Left cardiac atrium (tissue), 4 donors: ENCODE measurements at regions of chr10 and their contacts with region 1.

Region 1: GRCh38 chr10:133329491-133330202 is 7.0 kb downstream of the CALY start:
- DNase-seq: peak; percentile 90
- ATAC-seq: peak; percentile 81 to 87

Region 2: DNA sequence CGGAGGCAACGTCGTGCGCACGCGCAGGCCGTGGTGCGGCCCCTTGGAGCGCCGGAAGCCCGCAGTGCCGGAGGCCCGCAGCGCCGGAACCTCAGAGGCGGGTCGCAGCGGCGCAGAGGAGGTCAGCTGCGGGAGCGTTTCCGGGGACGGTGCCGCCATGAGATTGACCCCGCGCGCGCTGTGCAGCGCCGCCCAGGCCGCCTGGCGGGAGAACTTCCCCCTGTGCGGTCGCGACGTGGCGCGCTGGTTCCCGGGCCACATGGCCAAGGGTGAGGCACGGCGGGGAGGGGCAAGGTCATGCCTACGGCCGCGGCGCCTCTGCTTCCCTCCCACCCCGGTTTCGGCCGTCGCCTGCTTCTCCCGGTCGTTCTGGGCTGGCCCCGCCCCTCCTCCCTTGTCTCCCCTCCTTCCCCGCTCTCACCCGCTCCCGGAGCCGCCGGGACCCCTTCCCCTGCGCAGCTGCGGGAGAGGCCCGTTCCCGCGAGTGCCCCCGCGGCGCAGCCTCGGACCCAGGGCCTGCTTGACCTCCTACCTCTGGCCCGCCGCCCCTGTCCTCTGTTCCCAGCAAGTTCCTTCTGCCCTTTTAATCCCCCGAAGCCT is 64.5 kb after region 1 on chr10 and contains the start of gene MTG1:
- intact Hi-C with region 1: loop called in 1 of 2 experiments (anchors 2 kb)
- DNase-seq: peak; percentile 96
- ATAC-seq: peak; percentile 97 to 99
- total RNA-seq, gene MTG1: 18.8 to 23.2 TPM

Region 3: DNA sequence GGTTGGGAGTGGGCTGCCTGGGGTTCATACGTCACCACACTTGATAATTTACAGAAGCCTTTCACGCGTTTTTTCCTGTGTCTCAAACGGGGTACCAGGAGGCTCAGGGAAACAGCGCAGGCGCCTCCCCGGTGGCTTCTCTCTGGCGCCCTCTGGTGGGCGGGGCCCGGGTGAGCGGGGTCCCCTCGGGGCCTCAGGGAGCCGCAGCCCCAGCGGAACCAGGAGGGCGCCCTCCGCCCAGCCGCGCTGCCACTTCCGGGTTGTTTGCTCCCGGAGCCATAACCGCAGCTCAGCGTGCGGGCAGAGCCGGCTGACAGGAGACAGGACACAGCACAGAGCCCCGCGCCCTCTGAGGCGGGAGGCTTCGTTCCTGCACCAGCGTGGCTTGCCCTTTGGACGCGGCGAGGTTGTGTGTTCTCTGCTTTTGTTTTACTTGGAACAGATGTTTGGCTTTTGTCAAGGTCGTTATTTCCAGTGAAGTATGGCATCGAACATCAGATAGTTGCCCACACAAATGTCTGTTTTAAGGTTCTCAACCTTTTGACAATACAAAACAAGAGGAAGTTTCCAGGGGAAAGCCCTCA is 190.6 kb after region 1 on chr10:
- intact Hi-C with region 1: loop called in 1 of 2 experiments (anchors 10 kb)
- DNase-seq: peak; percentile 85
- ATAC-seq: peak; percentile 98 to 99

Region 4: DNA sequence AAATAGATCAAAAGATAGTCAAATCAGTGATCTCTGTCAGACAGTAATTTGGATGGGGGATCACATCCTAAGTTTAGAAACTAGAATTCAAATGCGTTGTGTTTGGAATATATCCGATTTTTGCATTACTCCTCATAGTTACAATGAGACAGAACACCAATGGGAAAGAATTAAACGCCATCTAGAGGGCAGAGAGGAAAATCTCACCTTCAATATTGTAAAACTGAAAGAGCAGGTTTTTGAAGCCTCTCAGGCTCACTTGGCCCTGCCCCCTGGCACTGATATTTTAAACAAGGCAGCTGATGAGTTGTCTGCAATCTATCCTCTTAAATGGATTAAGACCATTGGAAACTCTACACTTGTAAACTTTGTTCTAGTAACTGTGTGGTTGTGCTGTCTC is 279.2 kb after region 1 on chr10:
- intact Hi-C with region 1: loop called in 1 of 2 experiments (anchors 5 kb)
- DNase-seq: no peak
- ATAC-seq: no peak